Posterior cingulate gyrus (tissue), 11 donors: ENCODE measurements at regions of chr5 and their contacts with region 1.

Region 1: GRCh38 chr5:179495906-179496455 is 54.4 kb upstream of the RUFY1 start:
- DNase-seq: peak in 5 of 10 donors; percentile 10 to 86 (median 34)

Region 2: DNA sequence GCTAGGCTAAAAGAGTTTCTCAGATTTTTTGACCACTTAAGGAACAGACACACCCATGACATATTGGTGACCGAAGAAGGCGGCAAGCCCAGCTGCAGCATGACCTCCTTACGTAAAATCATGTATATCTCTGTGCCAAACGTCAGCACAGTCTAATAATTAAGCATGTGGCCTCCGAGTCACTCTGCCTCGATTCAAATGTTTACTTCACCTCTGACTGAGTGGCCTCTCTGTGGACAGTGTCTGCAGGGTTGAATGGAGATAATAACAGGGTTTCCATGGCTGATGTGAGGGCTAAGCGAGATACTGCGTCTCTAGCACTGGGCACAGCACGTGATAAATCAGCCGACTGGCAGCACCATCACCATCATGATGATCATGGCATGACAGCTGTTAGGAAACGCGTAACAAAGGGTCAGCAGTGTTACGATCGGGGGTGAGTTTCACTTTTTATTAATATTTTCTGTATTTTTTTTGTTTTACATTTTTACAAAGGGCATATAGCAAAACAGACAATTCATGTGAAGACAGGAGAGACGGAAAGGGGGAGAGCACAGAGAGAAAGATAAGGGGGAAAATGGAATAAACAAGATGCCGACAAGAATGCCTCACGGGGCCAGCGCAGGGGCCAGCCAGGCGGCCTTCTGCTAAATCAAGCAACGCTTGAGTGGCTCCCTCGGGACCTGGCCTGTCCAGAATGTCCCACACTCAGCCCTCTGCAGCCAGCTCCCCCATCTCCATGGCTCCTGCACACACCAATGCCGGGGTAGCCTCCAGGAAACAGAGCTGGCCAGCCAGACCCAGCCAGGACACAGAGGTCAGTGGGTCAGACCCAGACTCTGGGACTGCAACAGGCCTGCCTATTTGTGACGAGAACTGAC is 211.0 kb before region 1 on chr5:
- intact Hi-C with region 1: loop called (anchors 10 kb)
- DNase-seq: peak in 8 of 10 donors; percentile 23 to 84 (median 40)

Region 3: GRCh38 chr5:179345433-179346321 is 150.3 kb before region 1 on chr5 and contains the start of gene ADAMTS2:
- intact Hi-C with region 1: loop called (anchors 10 kb)
- DNase-seq: peak in 9 of 10 donors; percentile 31 to 89 (median 52)